Endothelial cell of umbilical vein (primary cell): ENCODE measurements at regions of chr1 and their contacts with region 1.

Region 1: GRCh38 chr1:55140546-55140983 is 74.6 kb downstream of the USP24 start:
- DNase-seq: peak; percentile 82
- H3K4me3 ChIP-seq: no peak overlapping the region
- H3K27ac ChIP-seq: no peak overlapping the region
- H3K4me1 ChIP-seq: peaks cover 7% of the 10 kb centered on the region
- H3K27me3 ChIP-seq: no peaks in the 10 kb centered on the region
- CTCF ChIP-seq: peak; percentile 67 to 76
- POLR2A ChIP-seq: no peak

Region 2: DNA sequence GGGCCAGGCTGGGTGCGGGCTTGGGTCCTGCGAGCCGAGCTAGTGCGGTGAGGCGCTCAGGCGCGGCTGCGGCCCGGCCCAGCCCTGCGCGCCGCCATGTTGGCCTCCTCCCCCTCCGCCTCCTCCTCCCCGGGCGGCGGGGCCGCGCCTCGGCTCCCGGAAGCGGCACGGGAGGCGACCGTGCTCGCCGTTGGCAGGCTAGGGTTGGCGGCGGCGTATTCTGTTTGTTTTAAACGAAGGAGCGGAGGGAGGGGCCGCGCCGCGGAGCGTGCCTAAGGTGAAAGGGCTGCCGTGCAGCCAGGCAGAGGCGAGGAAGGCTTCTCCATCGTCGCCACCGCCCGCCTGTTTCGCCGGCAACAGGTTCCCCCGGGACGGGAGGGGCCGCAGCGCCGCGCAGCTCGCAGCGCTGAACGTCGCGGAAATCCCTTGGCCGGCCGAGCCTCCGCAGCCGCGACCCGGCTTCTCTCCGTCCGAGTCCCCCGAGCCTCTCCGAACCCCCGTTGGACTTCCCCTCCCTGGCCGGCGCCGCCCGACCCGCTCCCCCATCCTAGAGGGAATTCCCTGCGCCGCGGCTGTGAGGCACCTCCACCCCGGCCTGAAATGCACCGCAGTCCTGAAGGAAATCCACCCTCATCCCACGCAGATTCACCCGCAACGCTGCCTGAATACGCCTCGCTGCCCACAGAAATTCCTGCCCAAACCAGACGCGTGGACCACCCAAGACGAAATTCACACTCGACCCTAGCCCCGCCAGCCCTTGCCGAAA is 74.9 kb after region 1 on chr1 and contains the start of gene USP24:
- CTCF ChIA-PET with region 1: no interaction called
- POLR2A ChIA-PET with region 1: no interaction called
- dilution Hi-C with region 1: no loop called
- intact Hi-C with region 1: loop called (anchors 2 kb)
- DNase-seq: peak; percentile 69
- H3K4me3 ChIP-seq: peak within 1 kb of the TSS; percentile 46 to 79 (median 49)
- H3K27ac ChIP-seq: peak within 1 kb of the TSS; percentile 34
- H3K4me1 ChIP-seq: peaks cover 17% of the 10 kb centered on the region
- H3K27me3 ChIP-seq: no peaks in the 10 kb centered on the region
- CTCF ChIP-seq: no peak
- POLR2A ChIP-seq: peak; percentile 72
- total RNA-seq, gene USP24: 30.0 and 32.6 TPM in 2 replicates

Region 3: DNA sequence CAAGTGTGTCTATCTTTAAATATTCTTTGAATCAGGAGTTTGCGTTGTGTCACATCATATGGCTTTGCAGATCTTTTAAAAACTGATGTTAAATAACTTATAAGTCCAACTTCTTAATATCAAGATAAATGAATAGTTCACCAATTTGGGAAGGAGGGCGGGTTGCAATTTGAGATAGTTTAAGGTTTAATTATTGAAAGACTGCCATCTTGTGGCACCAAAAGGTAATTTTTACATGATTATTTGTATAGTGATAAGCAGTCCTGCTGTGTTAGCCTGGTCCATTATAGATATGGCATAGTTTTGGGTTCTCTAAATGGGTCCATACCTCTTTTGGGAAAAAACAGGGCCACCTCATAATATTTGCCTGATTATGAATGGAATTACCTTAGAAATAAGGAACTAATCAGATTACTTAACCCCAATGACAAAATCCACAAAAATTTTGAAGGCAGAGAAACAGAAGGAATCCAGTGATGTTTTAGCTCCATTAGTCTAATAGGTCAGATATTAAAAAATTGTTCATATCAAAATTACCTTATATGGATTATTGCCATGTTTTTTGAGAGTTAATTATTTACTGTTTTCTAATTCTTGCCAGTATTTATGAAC is 1568.8 kb after region 1 on chr1:
- CTCF ChIA-PET with region 1: no interaction called
- POLR2A ChIA-PET with region 1: no interaction called
- dilution Hi-C with region 1: no loop called
- intact Hi-C with region 1: loop called (anchors 10 kb)
- DNase-seq: peak; percentile 69
- H3K4me3 ChIP-seq: no peak overlapping the region
- H3K27ac ChIP-seq: no peak overlapping the region
- H3K4me1 ChIP-seq: peaks cover 2% of the 10 kb centered on the region
- H3K27me3 ChIP-seq: no peaks in the 10 kb centered on the region
- CTCF ChIP-seq: peak; percentile 32 to 42
- POLR2A ChIP-seq: no peak

Region 4: GRCh38 chr1:56821140-56821797 is 1680.7 kb after region 1 on chr1:
- CTCF ChIA-PET with region 1: no interaction called
- POLR2A ChIA-PET with region 1: no interaction called
- dilution Hi-C with region 1: no loop called
- intact Hi-C with region 1: loop called (anchors 10 kb)
- DNase-seq: peak; percentile 62
- H3K4me3 ChIP-seq: no peak overlapping the region
- H3K27ac ChIP-seq: no peak overlapping the region
- H3K4me1 ChIP-seq: no peaks in the 10 kb centered on the region
- H3K27me3 ChIP-seq: no peaks in the 10 kb centered on the region
- CTCF ChIP-seq: peak; percentile 93 to 95
- POLR2A ChIP-seq: no peak